PC-9 (cell line): ENCODE measurements at regions of chr3 and their contacts with region 1.

Region 1: GRCh38 chr3:52039846-52040245 is 16.5 kb downstream of the DUSP7 start:
- DNase-seq: no peak
- H3K4me3 ChIP-seq: no peak overlapping the region
- H3K27ac ChIP-seq: no peak overlapping the region
- H3K4me1 ChIP-seq: no peaks in the 10 kb centered on the region
- H3K27me3 ChIP-seq: no peaks in the 10 kb centered on the region
- CTCF ChIP-seq: no peak

Region 2: GRCh38 chr3:52010431-52010830 is 29.4 kb before region 1 on chr3:
- CTCF ChIA-PET with region 1: interaction called, 16 read pairs
- POLR2A ChIA-PET with region 1: no interaction called
- intact Hi-C with region 1: no loop called
- DNase-seq: no peak
- H3K4me3 ChIP-seq: no peak overlapping the region
- H3K27ac ChIP-seq: no peak overlapping the region
- H3K4me1 ChIP-seq: no peaks in the 10 kb centered on the region
- H3K27me3 ChIP-seq: no peaks in the 10 kb centered on the region
- CTCF ChIP-seq: no peak

Region 3: DNA sequence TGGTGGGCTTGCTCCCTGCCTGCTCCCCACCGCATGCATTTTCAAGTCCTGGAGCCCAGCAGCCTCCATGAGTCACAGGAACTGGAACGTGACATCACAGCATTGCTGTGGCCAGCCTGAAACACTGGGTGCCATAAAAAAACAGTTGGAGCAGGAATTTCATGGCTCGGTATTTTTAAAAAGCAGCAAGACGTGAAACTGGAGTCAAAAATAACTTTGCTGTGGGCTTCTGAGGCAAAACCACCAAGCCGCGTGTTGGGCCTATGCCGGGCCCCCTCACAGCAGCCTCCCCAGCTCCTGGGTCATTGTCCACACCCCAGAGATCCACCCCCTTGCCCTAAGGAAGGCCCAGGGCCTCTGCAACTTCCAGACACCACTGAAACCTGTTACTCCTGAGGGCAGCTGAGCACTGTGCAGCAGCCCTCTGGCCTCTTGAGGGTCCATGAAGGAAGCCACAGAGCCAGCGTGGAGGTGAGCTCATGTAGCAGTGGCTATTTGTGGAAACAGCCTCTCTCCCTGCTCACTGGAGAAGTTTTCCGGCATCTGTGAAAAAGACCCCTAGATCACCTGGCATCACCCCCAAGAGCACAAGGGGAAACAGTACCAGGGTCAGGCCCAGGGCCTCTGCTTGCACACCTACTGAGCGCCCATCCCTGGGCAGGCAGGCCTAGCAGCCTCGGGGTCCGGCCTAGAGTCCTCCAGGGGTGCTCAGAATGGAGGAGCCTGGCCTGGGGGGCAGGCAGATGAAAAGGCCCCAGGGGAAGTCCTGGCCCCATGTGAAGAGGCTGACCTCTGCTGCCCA is 50.5 kb after region 1 on chr3:
- CTCF ChIA-PET with region 1: no interaction called
- POLR2A ChIA-PET with region 1: no interaction called
- intact Hi-C with region 1: no loop called
- DNase-seq: peak in 1 of 2 experiments; percentile 52
- H3K4me3 ChIP-seq: no peak overlapping the region
- H3K27ac ChIP-seq: no peak overlapping the region
- H3K4me1 ChIP-seq: no peaks in the 10 kb centered on the region
- H3K27me3 ChIP-seq: no peaks in the 10 kb centered on the region
- CTCF ChIP-seq: no peak